H1 (cell line): ENCODE measurements at regions of chr2 and their contacts with region 1.

Region 1: DNA sequence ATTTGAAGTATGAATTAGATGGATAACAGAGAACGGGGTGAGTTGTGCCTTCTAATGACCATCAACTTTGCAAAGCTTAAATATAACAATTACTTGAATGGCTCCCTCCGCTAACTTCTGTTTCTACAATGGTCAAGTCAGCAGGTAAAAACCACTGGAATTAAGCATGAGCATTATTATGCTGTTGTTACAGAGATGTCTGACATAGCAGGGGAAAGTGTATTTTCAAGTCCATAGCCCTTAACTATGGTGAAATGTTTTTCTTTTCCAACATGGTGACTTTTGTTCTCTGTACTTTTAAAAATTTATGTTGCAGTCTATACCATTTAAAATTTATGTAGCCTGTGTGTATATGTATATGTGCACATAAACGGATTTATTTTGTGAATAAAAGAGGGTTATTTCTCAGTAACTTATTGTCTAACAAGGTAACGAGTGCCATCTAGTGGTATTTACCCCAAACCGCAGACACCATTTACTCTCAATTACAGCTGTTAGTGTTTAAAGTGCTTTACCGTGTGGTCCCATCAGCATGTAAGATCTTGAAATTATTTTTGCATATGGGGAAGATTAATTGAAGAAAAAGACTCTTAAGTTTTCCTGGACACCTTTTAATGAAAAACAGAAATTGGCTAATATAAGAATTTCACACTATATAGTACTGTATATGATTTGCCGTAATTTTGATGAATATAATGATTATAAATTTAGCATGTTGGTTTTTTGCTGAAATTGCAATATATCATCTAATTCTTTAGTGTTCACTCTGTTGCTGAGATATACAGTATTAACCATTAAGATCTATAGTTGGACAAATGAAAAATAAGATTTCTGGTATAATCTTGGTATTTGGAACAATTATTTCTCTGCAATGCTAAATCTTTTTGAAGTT is 78.2 kb downstream of the UBE2E3 start:
- DNase-seq: no peak
- H3K4me3 ChIP-seq: no peak overlapping the region
- H3K27ac ChIP-seq: no peak overlapping the region
- H3K4me1 ChIP-seq: peaks cover 0 to 2% (median 0%) of the 10 kb centered on the region in 4 experiments; a peak in 2 of 7 replicates
- H3K27me3 ChIP-seq: no peaks in the 10 kb centered on the region
- CTCF ChIP-seq: peak in 2 of 3 experiments; percentile 37 to 68; a peak in 2 of 4 replicates
- EP300 ChIP-seq: no peak
- POLR2A ChIP-seq: no peak
- RAD21 ChIP-seq: peak; percentile 80 to 83

Region 2: DNA sequence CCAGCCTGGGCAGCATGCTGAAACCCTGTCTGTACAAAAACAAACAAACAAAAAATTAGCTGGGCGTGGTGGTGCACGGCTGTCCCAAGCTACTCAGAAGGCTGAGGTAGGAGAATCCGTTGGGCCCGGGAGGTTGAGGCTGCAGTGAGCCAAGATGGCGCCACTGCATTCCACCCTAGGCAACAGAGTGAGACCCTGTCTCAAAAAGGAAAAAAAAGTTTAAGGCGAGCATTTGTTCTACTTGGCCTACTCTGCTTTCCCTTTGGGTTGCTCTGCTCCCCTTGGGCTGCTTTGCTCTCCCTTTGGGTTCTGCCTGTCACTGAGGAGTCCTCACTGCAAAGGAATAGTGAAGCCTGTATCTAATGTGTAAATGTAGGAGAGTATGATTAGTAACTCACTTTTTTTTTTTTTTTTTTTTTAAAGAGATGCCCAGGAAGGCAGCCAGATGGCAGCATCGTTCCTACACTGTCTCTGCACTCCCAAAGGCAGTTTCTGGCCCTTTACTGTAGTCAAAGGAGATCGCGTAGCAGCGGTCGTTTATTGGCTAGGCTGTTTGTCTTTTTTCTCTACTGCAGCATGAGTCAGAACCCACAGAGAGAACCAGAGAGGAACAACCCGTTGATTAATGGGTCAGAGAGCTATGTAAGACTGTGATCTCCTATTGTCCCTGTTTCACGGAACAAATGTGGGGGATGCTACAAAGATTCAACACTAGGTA is 933.2 kb before region 1 on chr2:
- CTCF ChIA-PET with region 1: interaction called, 28 read pairs
- POLR2A ChIA-PET with region 1: interaction called, 5 read pairs
- DNase-seq: peak; percentile 44 to 57
- H3K4me3 ChIP-seq: no peak overlapping the region
- H3K27ac ChIP-seq: no peak overlapping the region
- H3K4me1 ChIP-seq: peaks cover 3 to 7% (median 4%) of the 10 kb centered on the region in 4 experiments; a peak in 4 of 7 replicates
- H3K27me3 ChIP-seq: no peaks in the 10 kb centered on the region
- CTCF ChIP-seq: peak; percentile 37 to 69 (median 49)
- EP300 ChIP-seq: no peak
- POLR2A ChIP-seq: no peak
- RAD21 ChIP-seq: peak; percentile 89 to 91

Region 3: DNA sequence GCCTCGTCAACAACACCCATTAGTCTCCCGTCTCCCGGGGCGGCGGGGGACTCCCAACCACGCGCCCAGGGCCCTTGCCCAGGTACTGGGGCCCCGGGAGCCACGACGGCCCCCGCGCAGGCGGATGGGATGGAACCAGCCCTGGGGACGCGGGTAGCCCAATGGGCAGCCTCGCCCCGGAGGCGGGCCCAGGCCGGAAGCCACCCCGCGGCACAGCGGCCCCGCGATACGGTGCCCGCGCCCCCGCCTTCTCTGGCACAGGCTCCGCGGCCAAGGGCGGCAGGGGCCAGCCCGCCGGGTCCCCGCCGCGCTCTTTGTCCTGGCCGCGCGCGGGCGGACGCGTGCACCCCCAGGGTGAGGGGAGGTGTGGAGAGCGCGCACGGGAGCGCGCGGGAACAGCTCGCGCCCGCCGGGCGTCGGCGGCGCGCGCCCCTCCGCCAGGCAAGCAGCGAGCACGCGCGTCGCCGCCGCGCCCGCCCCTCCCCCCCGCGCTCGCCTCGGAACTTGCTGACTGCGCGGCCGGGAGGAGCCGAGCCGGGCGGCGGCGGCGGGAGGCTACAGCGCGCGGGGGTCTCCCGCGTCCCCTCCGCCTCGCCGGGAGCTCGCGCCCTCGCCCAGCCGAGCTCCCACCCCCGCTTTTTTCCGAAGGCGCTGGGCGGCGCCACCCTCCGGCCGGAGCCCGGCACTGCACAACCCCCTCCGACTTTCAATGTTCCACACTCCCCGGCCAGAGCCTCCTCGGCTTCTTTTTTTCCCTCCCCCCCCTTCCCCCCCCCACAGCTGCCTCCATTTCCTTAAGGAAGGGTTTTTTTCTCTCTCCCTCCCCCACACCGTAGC is 78.3 kb before region 1 on chr2 and contains the start of gene UBE2E3:
- CTCF ChIA-PET with region 1: interaction called, 18 read pairs
- POLR2A ChIA-PET with region 1: interaction called, 6 read pairs
- DNase-seq: peak; percentile 54 to 91
- H3K4me3 ChIP-seq: peak within 1 kb of the TSS; percentile 81 to 97 (median 93)
- H3K27ac ChIP-seq: peak within 1 kb of the TSS; percentile 61
- H3K4me1 ChIP-seq: peaks cover 0 to 12% (median 3%) of the 10 kb centered on the region in 4 experiments; a peak in 1 of 7 replicates
- H3K27me3 ChIP-seq: no peaks in the 10 kb centered on the region; a peak in 1 of 7 replicates
- CTCF ChIP-seq: peak; percentile 50 to 62 (median 60)
- EP300 ChIP-seq: peak in 1 of 2 experiments; percentile 49; a peak in 2 of 3 replicates
- POLR2A ChIP-seq: peak; percentile 75 to 88
- RAD21 ChIP-seq: peak; percentile 52 to 54
- total RNA-seq, gene UBE2E3: 96.0 and 106 TPM in 2 replicates

Region 4: GRCh38 chr2:181008407-181008806 is 50.2 kb before region 1 on chr2:
- CTCF ChIA-PET with region 1: no interaction called
- POLR2A ChIA-PET with region 1: no interaction called
- DNase-seq: no peak
- H3K4me3 ChIP-seq: no peak overlapping the region
- H3K27ac ChIP-seq: no peak overlapping the region
- H3K4me1 ChIP-seq: no peaks in the 10 kb centered on the region; a peak in 2 of 7 replicates
- H3K27me3 ChIP-seq: no peaks in the 10 kb centered on the region
- CTCF ChIP-seq: no peak
- EP300 ChIP-seq: no peak
- POLR2A ChIP-seq: no peak
- RAD21 ChIP-seq: no peak

Region 5: DNA sequence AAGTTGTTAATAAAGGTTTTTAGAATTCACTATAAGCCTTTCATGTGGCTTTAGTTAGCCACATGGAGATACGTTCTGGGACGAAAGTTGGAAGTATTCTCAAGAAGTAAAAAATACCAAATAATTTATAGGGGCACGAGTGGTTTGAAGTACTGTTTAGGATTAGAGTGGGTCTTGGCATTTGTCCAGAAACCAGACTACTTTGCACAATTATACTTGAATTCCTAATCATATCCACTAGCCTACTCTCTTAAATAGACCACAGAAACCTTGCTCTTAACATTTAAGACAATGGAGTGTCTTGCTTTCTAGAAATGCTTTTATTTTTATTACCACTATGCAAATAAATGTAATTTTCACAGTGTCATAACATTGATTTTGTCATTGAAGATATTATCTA is 33.6 kb before region 1 on chr2:
- CTCF ChIA-PET with region 1: interaction called, 13 read pairs
- POLR2A ChIA-PET with region 1: no interaction called
- DNase-seq: no peak
- H3K4me3 ChIP-seq: no peak overlapping the region
- H3K27ac ChIP-seq: no peak overlapping the region
- H3K4me1 ChIP-seq: peaks cover 0 to 7% (median 0%) of the 10 kb centered on the region in 4 experiments; a peak in 1 of 7 replicates
- H3K27me3 ChIP-seq: no peaks in the 10 kb centered on the region
- CTCF ChIP-seq: no peak
- EP300 ChIP-seq: no peak
- POLR2A ChIP-seq: no peak
- RAD21 ChIP-seq: no peak

Region 6: DNA sequence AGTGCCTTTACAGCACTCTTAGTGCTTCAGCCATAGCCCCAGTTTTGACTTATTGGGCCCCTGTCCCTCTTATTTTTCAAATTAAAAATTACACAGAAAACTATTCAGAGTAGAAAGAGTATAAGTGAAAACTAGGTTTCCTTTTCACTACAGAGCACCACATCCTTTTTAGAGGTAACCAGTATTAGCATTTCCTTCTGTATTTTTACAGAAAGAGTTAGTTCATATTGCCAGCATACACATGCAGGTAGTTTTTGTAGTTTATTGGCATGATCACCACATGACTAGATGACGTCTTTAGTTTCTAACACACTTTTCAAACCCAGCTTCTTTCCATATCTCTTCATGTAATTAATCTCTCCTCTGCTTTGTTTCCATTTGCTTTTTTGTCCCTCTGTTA is 11.8 kb before region 1 on chr2:
- CTCF ChIA-PET with region 1: interaction called, 10 read pairs
- POLR2A ChIA-PET with region 1: interaction called, 4 read pairs
- DNase-seq: no peak
- H3K4me3 ChIP-seq: no peak overlapping the region
- H3K27ac ChIP-seq: no peak overlapping the region
- H3K4me1 ChIP-seq: no peaks in the 10 kb centered on the region
- H3K27me3 ChIP-seq: no peaks in the 10 kb centered on the region
- CTCF ChIP-seq: no peak
- EP300 ChIP-seq: no peak
- POLR2A ChIP-seq: no peak
- RAD21 ChIP-seq: no peak

Region 7: GRCh38 chr2:181070119-181070835 is 11.7 kb after region 1 on chr2:
- CTCF ChIA-PET with region 1: interaction called, 11 read pairs
- POLR2A ChIA-PET with region 1: no interaction called
- DNase-seq: no peak
- H3K4me3 ChIP-seq: no peak overlapping the region
- H3K27ac ChIP-seq: no peak overlapping the region
- H3K4me1 ChIP-seq: peaks cover 0 to 4% (median 0%) of the 10 kb centered on the region in 4 experiments; a peak in 1 of 7 replicates
- H3K27me3 ChIP-seq: no peaks in the 10 kb centered on the region
- CTCF ChIP-seq: no peak
- EP300 ChIP-seq: no peak
- POLR2A ChIP-seq: no peak
- RAD21 ChIP-seq: no peak

Region 8: DNA sequence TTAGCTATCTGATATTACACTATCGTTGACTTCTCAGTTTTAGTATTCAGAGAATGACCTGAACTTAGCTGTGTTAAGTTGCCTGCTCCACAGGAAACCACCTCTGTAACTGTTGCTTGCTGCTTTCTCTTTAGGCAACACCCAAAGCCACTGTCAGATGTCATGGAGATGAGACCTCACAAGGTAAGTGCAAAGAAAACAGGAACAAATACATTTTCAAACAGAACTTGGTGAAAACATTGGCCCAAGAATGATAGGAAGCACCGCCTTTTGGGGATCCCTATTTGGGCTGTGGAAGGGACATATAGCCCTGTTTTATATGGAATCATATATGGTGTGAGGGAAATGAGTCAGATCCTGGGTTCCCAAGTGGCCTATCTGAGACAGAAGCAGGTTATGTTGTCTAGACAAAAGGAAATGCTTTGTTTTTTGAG is 65.2 kb after region 1 on chr2:
- CTCF ChIA-PET with region 1: no interaction called
- POLR2A ChIA-PET with region 1: no interaction called
- DNase-seq: no peak
- H3K4me3 ChIP-seq: no peak overlapping the region
- H3K27ac ChIP-seq: no peak overlapping the region
- H3K4me1 ChIP-seq: 0 out of 7 replicates have a peak, but pooled peaks cover 0 to 2% (median 0%) of the 10 kb centered on the region in 4 experiments
- H3K27me3 ChIP-seq: no peaks in the 10 kb centered on the region
- CTCF ChIP-seq: no peak
- EP300 ChIP-seq: no peak
- POLR2A ChIP-seq: no peak
- RAD21 ChIP-seq: no peak